ENCODE measurements at regions of chr2 and their contacts with region 1.

Region 1: GRCh38 chr2:177332041-177332991 is 60.3 kb upstream of the AGPS start:
- DNase-seq: peak in 3 of 10 donors; percentile 26 to 36 (median 34)
- H3K4me3 ChIP-seq: peak overlapping the region in 47 of 59 donors; percentile 1 to 58 (median 33)
- H3K27ac ChIP-seq: peak overlapping the region in 53 of 59 donors; percentile 4 to 85 (median 60)
- H3K27me3 ChIP-seq: no peaks in the 10 kb centered on the region
- CTCF ChIP-seq: peak; percentile 53 to 87 (median 78)

Region 2: GRCh38 chr2:176595986-176596385 is 736.3 kb before region 1 on chr2:
- intact Hi-C with region 1: no loop called
- DNase-seq: no peak
- H3K4me3 ChIP-seq: no peak overlapping the region
- H3K27ac ChIP-seq: no peak overlapping the region
- H3K27me3 ChIP-seq: peaks cover 0 to 9% (median 0%) of the 10 kb centered on the region in 45 donors
- CTCF ChIP-seq: no peak

Region 3: GRCh38 chr2:177263451-177264208 is 68.7 kb before region 1 on chr2:
- intact Hi-C with region 1: loop called (anchors 2 to 5 kb)
- DNase-seq: peak; percentile 94 to 98 (median 96)
- H3K4me3 ChIP-seq: peak overlapping the region; percentile 65 to 97 (median 88)
- H3K27ac ChIP-seq: peak overlapping the region; percentile 89 to 100 (median 99)
- H3K27me3 ChIP-seq: no peaks in the 10 kb centered on the region
- CTCF ChIP-seq: peak; percentile 67 to 93 (median 83)

Region 4: GRCh38 chr2:177419274-177419673 is 87.0 kb after region 1 on chr2:
- intact Hi-C with region 1: loop called (anchors 2 to 5 kb)
- DNase-seq: no peak
- H3K4me3 ChIP-seq: no peak overlapping the region
- H3K27ac ChIP-seq: no peak overlapping the region
- H3K27me3 ChIP-seq: no peaks in the 10 kb centered on the region
- CTCF ChIP-seq: no peak

Region 5: GRCh38 chr2:177724398-177725287 is 392.3 kb after region 1 on chr2:
- intact Hi-C with region 1: loop called in 1 of 2 experiments (anchors 10 kb)
- DNase-seq: peak in 9 of 10 donors; percentile 45 to 71 (median 55)
- H3K4me3 ChIP-seq: peak overlapping the region in 11 of 59 donors; percentile 4 to 35 (median 13)
- H3K27ac ChIP-seq: peak overlapping the region in 1 of 59 donors; percentile 25
- H3K27me3 ChIP-seq: no peaks in the 10 kb centered on the region
- CTCF ChIP-seq: peak; percentile 53 to 96 (median 88)

Measured in dorsolateral prefrontal cortex (tissue), 120 donors.